ENCODE measurements at regions of chr1 and their contacts with region 1.

Region 1: DNA sequence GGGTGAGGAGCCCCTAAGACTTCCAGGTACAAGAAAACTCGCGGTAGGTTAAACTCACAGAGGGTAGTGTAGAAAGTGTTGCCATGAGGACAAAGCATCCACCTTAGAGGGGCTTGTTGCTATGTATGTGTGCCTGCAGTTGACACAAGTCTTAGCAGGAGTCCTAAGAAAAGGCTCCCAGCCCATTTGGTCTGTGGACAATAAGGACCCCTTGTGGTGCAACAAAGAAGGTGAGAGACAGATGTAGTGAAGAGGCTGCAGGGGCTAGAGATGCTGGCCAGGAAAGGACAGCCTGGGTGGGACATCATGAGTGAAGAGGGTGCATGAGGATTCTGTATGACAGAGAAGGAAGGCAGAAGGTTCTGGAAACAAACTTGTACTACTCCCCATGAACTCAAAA is 36.3 kb upstream of the IL10 start:
- DNase-seq: peak; percentile 72
- ATAC-seq: peak; percentile 89
- H3K4me3 Mint-ChIP-seq: no peak overlapping the region
- H3K27ac Mint-ChIP-seq: peak overlapping the region; percentile 18
- H3K4me1 Mint-ChIP-seq: peaks cover 55% of the 10 kb centered on the region
- H3K27me3 Mint-ChIP-seq: peaks cover 2% of the 10 kb centered on the region

Region 2: DNA sequence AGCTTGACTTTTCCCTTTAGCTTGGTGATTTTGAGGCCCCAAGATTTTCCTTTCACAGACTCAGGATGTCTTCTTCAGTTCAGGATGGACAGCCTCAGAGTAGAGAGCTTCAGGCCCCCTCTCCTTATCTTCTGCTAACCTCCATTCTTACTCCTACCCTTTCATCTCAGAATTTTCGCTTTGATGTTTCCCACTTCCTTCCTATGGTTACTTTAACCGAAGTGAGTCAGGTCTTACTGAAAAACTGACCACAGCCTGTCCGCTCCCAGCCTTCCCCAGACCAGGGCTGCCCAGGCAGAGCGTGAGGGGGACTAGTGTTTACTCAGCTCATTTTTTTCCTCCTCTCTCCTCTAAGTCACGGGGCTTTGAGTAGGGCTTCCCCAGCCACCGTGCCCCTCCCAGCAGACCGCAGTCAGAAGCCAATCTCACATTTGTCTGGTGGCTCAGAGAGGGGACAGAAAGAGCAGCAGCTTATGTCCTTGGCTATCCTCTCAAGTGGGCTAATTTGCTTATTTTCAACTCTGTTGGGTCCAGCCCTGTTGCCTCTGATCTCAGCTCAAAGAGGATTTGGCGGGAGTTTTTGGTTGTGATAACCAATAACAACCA is 42.3 kb before region 1 on chr1:
- CTCF ChIA-PET with region 1: interaction called, 61 read pairs
- DNase-seq: peak; percentile 91
- ATAC-seq: peak; percentile 68
- H3K4me3 Mint-ChIP-seq: peak overlapping the region; percentile 13
- H3K27ac Mint-ChIP-seq: peak overlapping the region; percentile 80
- H3K4me1 Mint-ChIP-seq: peaks cover 64% of the 10 kb centered on the region
- H3K27me3 Mint-ChIP-seq: peaks cover 34% of the 10 kb centered on the region

Region 3: GRCh38 chr1:206826405-206826804 is 17.8 kb after region 1 on chr1:
- CTCF ChIA-PET with region 1: interaction called, 59 read pairs
- DNase-seq: peak; percentile 26
- ATAC-seq: no peak
- H3K4me3 Mint-ChIP-seq: no peak overlapping the region
- H3K27ac Mint-ChIP-seq: no peak overlapping the region
- H3K4me1 Mint-ChIP-seq: peaks cover 36% of the 10 kb centered on the region
- H3K27me3 Mint-ChIP-seq: no peaks in the 10 kb centered on the region

Region 4: DNA sequence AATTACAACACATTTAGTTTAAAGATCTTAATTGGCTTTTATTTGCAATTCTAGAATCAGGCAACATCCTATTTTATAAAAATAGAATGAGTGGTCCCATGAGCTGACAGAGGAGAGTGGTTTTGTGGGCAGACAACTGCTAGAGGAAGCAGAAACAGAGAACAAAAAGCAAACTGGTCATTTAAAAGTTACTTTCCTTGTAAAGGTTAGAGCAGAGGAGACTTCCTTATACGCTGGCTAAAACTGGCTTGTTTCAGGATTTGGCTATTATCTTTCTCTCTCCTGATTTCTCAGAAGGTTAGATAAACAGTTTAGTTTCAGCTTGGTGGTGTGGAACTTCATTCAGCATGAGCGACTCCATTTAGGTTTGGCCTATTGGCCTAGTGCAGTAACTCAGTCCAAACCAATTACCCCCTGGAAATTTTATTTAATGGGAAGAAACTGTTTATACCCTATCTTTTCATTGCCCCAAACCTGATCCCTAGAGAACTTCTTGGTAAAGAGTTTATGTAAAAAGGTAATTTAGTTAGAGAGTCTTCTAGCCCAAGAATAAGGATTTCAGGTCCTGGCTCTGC is 24.6 kb after region 1 on chr1:
- CTCF ChIA-PET with region 1: interaction called, 59 read pairs
- DNase-seq: no peak
- ATAC-seq: peak; percentile 38
- H3K4me3 Mint-ChIP-seq: no peak overlapping the region
- H3K27ac Mint-ChIP-seq: peak overlapping the region; percentile 4
- H3K4me1 Mint-ChIP-seq: peaks cover 52% of the 10 kb centered on the region
- H3K27me3 Mint-ChIP-seq: peaks cover 24% of the 10 kb centered on the region